ENCODE measurements at regions of chr1 and their contacts with region 1.

Region 1: DNA sequence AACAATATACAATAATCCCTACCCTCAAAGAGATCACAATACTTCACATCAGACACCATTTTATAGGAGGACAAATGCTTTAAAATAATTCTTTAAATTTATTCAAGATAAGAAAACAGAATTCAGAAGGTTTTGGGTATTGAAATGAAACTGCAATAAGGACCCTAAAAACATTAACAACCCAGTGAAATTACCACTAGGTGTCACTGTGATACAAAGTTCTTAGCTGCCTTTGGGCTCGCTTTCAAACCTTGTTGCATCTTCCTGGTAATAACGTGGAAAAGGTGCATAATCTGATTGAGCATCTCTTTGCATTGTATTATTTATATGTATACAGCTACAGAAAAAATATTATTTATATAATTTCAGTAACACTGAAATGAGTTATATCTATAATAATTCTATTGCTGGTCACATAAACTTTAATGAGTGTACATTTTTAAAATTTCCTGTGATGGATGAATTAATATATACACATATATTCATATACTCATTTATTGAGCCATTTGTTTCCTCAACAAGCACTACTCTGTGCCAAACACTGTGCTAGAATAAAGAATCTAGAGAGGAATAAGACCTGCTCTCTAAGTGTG is 185.2 kb downstream of the FAF1 start:
- DNase-seq: peak in 7 of 9 donors; percentile 7 to 53 (median 36)
- ATAC-seq: peak; percentile 54
- H3K4me3 ChIP-seq: no peak overlapping the region
- H3K4me3 Mint-ChIP-seq: no peak overlapping the region
- H3K27ac ChIP-seq: no peak overlapping the region
- H3K27ac Mint-ChIP-seq: no peak overlapping the region
- H3K4me1 ChIP-seq: no peaks in the 10 kb centered on the region
- H3K4me1 Mint-ChIP-seq: peaks cover 4 to 22% (median 13%) of the 10 kb centered on the region in 7 donors
- H3K27me3 ChIP-seq: no peaks in the 10 kb centered on the region
- H3K27me3 Mint-ChIP-seq: no peaks in the 10 kb centered on the region

Region 2: DNA sequence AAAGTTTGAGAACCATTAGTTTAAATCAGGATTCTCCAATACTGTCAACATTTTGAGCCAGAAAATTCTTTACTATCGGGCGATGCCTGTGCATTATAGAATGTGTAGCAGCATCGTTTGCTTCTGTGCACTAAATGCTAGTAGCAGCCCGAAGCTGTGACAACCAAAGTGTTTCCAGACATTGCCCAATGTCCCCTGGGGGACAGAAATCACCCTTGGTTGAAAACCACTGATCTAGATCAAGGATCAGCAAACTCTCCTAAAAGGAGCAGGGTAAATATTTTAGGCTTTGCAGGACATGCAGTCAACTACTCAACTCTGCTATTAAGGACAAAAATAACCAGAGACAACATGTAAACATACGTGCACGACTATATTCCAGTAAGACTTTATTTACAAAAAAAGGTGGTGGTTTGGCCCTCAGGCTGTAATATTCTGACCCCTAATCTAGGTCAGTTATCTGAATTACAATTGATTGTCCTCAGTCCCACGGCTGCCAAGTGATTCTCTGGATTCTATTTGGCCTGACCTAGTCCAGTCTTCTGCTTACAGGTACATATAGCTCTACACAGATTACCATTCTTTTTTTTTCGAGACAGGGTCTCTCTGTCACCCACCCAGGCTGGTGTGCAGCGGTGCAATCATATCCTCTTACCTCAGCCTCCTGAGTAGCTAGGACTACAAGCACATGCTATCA is 174.6 kb after region 1 on chr1:
- CTCF ChIA-PET with region 1: no interaction called
- POLR2A ChIA-PET with region 1: no interaction called
- intact Hi-C with region 1: no loop called
- DNase-seq: no peak
- ATAC-seq: no peak
- H3K4me3 ChIP-seq: no peak overlapping the region
- H3K4me3 Mint-ChIP-seq: no peak overlapping the region
- H3K27ac ChIP-seq: no peak overlapping the region
- H3K27ac Mint-ChIP-seq: no peak overlapping the region
- H3K4me1 ChIP-seq: no peaks in the 10 kb centered on the region
- H3K4me1 Mint-ChIP-seq: peaks cover 16 to 76% (median 62%) of the 10 kb centered on the region in 7 donors
- H3K27me3 ChIP-seq: no peaks in the 10 kb centered on the region
- H3K27me3 Mint-ChIP-seq: no peaks in the 10 kb centered on the region

Region 3: DNA sequence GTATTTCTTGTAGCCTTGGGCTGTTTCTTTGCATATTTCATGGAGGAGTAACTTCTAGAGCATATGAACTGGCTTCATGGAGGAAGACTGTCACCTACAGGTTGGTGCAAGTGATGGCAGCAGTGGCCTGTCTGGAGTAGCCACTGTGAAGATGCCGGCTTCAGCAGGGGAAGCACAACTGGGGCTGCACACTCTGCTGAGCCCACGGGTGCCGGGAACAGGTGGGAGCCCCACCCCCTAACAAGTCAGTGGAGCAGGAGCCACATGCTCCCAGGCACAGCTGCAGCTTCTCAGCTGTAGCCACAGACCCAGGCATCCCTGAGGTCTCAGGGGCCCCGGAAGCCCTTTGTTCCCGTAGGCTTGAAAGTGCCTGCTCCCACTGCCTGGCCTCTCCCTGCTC is 284.0 kb after region 1 on chr1:
- CTCF ChIA-PET with region 1: no interaction called
- POLR2A ChIA-PET with region 1: no interaction called
- intact Hi-C with region 1: loop called in 1 of 2 experiments (anchors 2 kb)
- DNase-seq: peak in 1 of 9 donors; percentile 3
- ATAC-seq: no peak
- H3K4me3 ChIP-seq: no peak overlapping the region
- H3K4me3 Mint-ChIP-seq: no peak overlapping the region
- H3K27ac ChIP-seq: no peak overlapping the region
- H3K27ac Mint-ChIP-seq: no peak overlapping the region
- H3K4me1 ChIP-seq: no peaks in the 10 kb centered on the region
- H3K4me1 Mint-ChIP-seq: no peaks in the 10 kb centered on the region
- H3K27me3 ChIP-seq: no peaks in the 10 kb centered on the region
- H3K27me3 Mint-ChIP-seq: peaks cover 11 to 28% (median 19%) of the 10 kb centered on the region in 5 donors